Panc1 (cell line): ENCODE measurements at regions of chr5 and their contacts with region 1.

Region 1: DNA sequence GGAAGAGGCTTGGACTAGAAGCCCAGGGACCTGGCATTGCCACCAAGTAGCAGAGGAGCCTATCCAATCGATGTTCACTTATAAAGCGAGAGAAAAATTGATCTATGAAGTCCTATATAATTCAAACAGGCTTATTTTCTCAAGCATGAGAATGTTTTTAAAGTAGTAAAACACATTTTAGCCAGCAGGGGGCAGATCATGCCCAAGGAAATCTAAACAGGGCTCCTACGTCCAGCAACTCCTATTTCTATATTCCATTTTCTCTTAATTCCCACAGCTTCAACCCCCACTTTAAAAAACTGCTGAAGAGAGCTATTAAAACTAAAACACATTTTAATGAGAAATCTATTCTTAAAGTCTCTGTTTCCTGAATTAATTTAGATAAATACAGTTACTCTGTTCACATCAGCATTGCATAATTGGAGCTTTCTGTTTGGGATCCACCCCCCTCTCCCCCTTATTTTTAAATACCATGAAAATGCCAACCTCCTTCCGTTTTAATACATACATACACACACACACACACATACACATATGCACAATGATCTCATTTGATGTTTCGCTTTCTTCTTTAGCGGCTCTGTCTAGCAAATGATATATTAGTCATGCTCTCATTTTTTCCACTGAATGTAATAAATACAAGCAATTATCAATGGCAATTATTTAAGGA is 144.9 kb downstream of the MYO10 start:
- DNase-seq: peak; percentile 62
- ATAC-seq: peak; percentile 73
- H3K4me3 ChIP-seq: no peak overlapping the region
- H3K27ac ChIP-seq: peak overlapping the region; percentile 20
- H3K4me1 ChIP-seq: peaks cover 13% of the 10 kb centered on the region
- H3K27me3 ChIP-seq: no peaks in the 10 kb centered on the region
- CTCF ChIP-seq: peak; percentile 67; the same call in 1 of the 2 replicates

Region 2: GRCh38 chr5:16866795-16867236 is 75.6 kb after region 1 on chr5:
- CTCF ChIA-PET with region 1: no interaction called
- POLR2A ChIA-PET with region 1: interaction called, 12 read pairs
- in situ Hi-C with region 1: no loop called
- intact Hi-C with region 1: no loop called
- DNase-seq: no peak
- ATAC-seq: peak; percentile 88
- H3K4me3 ChIP-seq: peak overlapping the region in 1 of 2 experiments; percentile 12; a peak in 2 of 4 replicates
- H3K27ac ChIP-seq: peak overlapping the region; percentile 91
- H3K4me1 ChIP-seq: peaks cover 87% of the 10 kb centered on the region
- H3K27me3 ChIP-seq: no peaks in the 10 kb centered on the region
- CTCF ChIP-seq: no peak

Region 3: GRCh38 chr5:16934123-16934522 is 143.0 kb after region 1 on chr5:
- CTCF ChIA-PET with region 1: interaction called, 5 read pairs
- POLR2A ChIA-PET with region 1: no interaction called
- in situ Hi-C with region 1: no loop called
- intact Hi-C with region 1: loop called (anchors 5 kb)
- DNase-seq: peak; percentile 77
- ATAC-seq: peak; percentile 76
- H3K4me3 ChIP-seq: peak overlapping the region; percentile 96 to 97
- H3K27ac ChIP-seq: peak overlapping the region; percentile 91
- H3K4me1 ChIP-seq: peaks cover 43% of the 10 kb centered on the region
- H3K27me3 ChIP-seq: peaks cover 9% of the 10 kb centered on the region
- CTCF ChIP-seq: peak; percentile 97